ENCODE measurements at regions of chr11 and their contacts with region 1.

Region 1: DNA sequence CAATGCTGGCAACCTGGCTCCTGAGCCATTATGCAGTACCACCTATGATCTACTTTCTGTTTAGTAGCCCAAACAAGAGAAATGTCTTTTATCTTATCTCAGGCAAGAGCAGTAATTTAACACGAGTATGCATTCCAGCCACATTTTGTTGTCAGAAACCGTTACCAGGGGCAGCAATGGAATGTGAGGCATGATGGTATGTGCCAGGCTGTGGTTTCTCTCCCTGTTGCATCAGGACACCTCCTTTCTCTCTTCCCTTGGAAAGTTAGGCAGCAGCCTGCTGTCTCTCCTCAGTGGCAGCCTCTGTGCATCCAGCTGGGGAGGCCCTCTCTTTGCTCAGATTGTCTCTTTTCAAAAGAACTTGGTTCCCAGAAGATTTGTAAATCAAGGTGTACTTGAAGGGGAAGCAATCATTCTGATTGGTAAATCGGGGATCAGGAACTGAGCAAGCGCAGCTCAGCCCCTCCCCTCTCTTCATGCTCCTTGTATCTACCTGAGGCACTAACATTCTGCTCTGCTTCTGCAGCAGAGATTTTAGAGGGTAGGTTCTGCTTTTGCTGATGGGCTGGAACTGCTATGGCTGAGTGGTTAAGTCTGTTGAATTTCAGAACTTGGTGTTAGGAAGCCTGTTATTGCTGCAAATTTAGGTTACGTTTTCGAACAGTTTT is 229.2 kb downstream of the ADAMTS15 start:
- DNase-seq: no peak
- H3K4me3 ChIP-seq: no peak overlapping the region
- H3K27ac ChIP-seq: peak overlapping the region; percentile 92 to 94
- H3K4me1 ChIP-seq: peaks cover 14 to 49% of the 10 kb centered on the region in 2 donors
- H3K27me3 ChIP-seq: no peaks in the 10 kb centered on the region
- CTCF ChIP-seq: no peak

Region 2: DNA sequence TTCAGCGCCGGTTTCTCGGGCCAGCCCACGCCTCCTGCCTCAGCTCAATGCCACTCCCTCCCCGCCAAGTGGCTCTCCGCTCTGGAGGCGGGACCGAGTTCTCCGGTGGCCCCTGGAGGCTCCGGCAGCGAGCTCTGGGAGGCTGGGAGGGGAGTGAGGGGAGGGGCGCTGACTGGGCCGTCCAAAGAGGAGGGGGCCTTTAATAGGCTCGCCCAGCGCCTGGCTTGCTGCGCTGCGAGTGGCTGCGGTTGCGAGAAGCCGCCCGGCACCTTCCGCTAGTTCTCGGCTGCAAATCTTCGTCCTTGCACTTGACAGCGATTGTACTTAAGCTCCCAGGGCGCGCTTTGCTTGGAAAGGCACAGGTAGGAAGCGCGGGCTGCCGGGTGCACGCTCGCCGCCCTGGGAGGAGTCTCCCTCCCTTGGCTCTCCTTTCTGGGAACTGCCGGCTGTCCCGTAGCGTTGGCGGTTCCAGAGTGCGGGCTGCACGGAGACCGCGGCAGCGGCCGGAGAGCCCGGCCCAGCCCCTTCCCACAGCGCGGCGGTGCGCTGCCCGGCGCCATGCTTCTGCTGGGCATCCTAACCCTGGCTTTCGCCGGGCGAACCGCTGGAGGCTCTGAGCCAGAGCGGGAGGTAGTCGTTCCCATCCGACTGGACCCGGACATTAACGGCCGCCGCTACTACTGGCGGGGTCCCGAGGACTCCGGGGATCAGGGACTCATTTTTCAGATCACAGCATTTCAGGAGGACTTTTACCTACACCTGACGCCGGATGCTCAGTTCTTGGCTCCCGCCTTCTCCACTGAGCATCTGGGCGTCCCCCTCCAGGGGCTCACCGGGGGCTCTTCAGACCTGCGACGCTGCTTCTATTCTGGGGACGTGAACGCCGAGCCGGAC is 229.0 kb before region 1 on chr11 and contains the start of gene ADAMTS15:
- intact Hi-C with region 1: loop called (anchors 5 kb)
- DNase-seq: peak; percentile 39 to 88
- H3K4me3 ChIP-seq: peak within 1 kb of the TSS; percentile 57 to 81
- H3K27ac ChIP-seq: peak within 1 kb of the TSS; percentile 76 to 82
- H3K4me1 ChIP-seq: peaks cover 11 to 24% of the 10 kb centered on the region in 2 donors
- H3K27me3 ChIP-seq: no peaks in the 10 kb centered on the region
- CTCF ChIP-seq: no peak
- total RNA-seq, gene ADAMTS15: 20.4 TPM

Region 3: DNA sequence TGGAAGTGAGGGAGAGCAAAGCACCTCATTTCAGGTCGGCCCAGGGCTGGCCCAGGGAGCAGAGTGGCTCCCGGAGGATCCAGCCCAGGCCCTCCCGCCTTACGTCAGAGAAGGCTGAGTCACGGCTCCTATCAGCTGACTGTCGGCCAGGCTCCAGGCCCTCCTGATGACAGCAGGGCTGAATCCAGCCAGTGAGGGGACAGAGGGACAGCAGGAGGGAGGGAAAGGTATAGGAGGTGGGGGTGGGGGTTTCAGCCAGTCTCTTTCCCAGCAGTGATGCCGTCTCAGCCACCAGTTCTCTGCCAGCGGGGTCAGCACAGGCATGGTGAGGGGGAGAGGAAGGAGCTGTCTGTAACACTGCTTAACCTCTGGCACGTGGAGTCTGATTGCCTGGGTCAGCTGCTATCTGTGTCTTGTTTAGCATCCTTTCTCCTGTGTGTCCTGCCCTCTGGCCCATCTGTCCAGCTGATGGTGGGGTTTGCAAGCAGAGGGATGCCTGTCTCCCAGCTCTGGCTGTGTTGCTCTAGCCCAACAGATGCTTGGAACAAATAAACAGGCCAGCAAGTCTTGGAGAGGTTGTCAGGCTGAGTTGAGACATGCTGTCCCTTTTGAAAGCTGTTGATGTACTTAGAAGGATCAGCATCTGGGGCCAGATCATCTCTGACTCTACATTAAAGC is 155.2 kb before region 1 on chr11:
- intact Hi-C with region 1: loop called (anchors 5 kb)
- DNase-seq: peak; percentile 81 to 97
- H3K4me3 ChIP-seq: no peak overlapping the region
- H3K27ac ChIP-seq: peak overlapping the region; percentile 76 to 85
- H3K4me1 ChIP-seq: peaks cover 0 to 23% of the 10 kb centered on the region in 2 donors
- H3K27me3 ChIP-seq: no peaks in the 10 kb centered on the region
- CTCF ChIP-seq: no peak

Region 4: DNA sequence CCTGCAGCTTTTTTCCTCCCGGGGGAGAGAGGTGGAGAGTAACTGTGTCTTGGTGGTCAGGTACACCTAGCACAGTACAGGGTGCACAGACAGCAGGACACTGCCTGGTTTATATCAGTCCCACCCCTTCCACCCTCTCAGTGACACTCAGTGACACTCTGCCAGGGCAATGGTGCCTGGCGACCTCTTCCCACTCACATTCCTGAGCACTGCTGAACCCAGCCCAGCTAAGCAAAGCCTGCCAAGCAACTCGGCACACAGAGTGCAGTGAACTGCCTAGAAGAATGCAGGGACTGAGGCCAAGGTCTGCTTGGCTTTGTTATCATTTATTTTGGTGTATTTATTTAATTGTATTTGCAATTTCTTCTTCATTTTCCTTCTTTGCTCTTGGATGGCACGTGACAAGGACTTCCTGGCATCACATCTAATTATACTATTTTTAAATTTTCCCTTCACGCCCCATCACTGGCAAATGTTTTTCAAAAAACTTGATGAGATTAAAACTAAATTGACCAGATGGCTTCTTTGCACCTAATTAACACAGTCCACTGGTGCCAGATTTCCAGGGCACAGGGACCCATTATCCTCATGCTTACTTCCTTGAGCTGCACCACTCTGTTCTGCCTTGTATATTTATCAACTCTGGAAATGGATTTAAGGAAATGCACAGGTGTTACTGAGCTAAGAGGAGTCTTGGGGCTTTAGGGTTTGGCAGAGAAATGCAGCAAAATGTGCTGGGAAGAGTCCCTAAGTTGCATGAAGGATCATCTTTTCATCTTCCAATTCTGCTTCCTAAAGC is 23.6 kb before region 1 on chr11:
- intact Hi-C with region 1: loop called (anchors 1 kb)
- DNase-seq: peak in 1 of 2 donors; percentile 89
- H3K4me3 ChIP-seq: no peak overlapping the region
- H3K27ac ChIP-seq: peak overlapping the region; percentile 74 to 80
- H3K4me1 ChIP-seq: peaks cover 14 to 37% of the 10 kb centered on the region in 2 donors
- H3K27me3 ChIP-seq: no peaks in the 10 kb centered on the region
- CTCF ChIP-seq: no peak

Region 5: GRCh38 chr11:130689222-130689908 is 11.7 kb after region 1 on chr11:
- intact Hi-C with region 1: no loop called
- DNase-seq: no peak
- H3K4me3 ChIP-seq: no peak overlapping the region
- H3K27ac ChIP-seq: peak overlapping the region; percentile 21 to 25
- H3K4me1 ChIP-seq: peaks cover 0 to 6% of the 10 kb centered on the region in 2 donors
- H3K27me3 ChIP-seq: no peaks in the 10 kb centered on the region
- CTCF ChIP-seq: no peak

Region 6: GRCh38 chr11:130782361-130783221 is 105.0 kb after region 1 on chr11:
- intact Hi-C with region 1: loop called (anchors 5 kb)
- DNase-seq: peak in 1 of 2 donors; percentile 69
- H3K4me3 ChIP-seq: peak overlapping the region; percentile 11 to 40
- H3K27ac ChIP-seq: peak overlapping the region; percentile 75 to 78
- H3K4me1 ChIP-seq: peaks cover 3 to 27% of the 10 kb centered on the region in 2 donors
- H3K27me3 ChIP-seq: no peaks in the 10 kb centered on the region
- CTCF ChIP-seq: no peak

Region 7: DNA sequence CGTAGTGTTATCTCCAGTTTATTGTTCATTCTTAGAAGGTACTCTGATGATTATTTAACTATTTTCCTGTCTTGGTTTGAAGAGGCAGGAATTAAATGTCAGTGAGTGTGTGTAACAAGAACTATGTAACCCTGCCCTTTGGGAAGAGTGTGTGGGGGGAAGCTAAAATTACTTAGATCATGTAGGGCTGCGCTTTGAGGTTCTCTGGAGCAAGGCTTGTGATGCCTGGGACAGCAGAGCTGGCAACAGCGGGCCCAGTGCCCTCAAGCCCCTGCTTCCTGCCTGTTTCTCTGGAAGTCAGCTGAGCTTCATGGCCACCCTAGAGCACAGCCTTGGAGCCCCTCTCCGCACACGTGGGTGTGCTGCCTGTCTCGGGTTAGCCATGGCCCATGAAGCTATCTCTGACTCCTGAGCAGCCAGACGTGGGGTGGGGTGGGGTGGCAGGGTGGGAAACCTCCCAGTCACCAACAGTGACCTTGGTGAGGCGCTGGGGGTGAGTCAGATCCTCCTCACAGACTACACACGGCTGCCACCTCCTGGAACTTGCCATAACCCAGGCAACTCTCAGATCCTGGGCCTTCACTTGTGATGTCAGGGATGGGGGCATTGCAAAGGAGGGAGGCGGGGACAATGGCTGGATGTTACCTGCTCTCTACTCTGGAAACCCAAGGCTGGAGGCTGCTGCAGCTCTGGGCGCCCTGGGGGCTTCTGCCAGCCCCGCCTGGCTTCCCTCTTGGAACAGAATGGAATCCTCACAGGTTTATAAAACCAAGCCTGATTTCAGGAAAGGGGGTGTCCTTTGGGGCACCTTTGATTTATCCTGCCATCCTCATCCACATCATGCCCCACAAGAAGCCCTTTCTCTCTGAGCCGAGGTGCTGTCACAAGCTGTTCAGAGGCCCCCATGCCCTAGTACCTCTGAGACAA is 150.1 kb after region 1 on chr11:
- intact Hi-C with region 1: loop called (anchors 5 kb)
- DNase-seq: peak in 1 of 2 donors; percentile 86
- H3K4me3 ChIP-seq: no peak overlapping the region
- H3K27ac ChIP-seq: peak overlapping the region; percentile 60 to 63
- H3K4me1 ChIP-seq: peaks cover 10 to 30% of the 10 kb centered on the region in 2 donors
- H3K27me3 ChIP-seq: no peaks in the 10 kb centered on the region
- CTCF ChIP-seq: peak; percentile 39 to 59 (median 56)

Region 8: DNA sequence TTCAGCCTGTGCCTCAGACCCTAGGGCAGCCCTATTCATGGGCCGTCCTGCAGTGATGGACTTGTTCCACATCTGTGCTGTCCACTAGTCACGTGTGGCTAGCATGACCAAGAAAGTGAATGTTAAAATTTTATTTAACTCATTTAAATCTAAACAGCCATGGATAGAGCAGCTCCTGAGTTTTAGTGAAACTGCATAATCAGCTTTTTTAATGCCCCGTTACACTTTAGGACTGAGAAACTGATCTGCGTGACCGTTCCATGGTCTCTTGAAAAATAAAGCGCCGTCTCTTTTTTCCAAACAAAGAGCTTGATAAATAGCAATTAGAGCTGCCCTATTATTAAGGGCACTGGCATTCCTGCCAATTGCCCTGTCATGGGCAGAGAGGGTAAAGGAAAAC is 315.2 kb after region 1 on chr11:
- intact Hi-C with region 1: no loop called
- DNase-seq: no peak
- H3K4me3 ChIP-seq: no peak overlapping the region
- H3K27ac ChIP-seq: no peak overlapping the region
- H3K4me1 ChIP-seq: no peaks in the 10 kb centered on the region
- H3K27me3 ChIP-seq: no peaks in the 10 kb centered on the region
- CTCF ChIP-seq: no peak

Measured in ascending aorta (tissue), 2 donors.